Heart left ventricle (tissue), 16 donors: ENCODE measurements at regions of chr11 and their contacts with region 1.

Region 1: GRCh38 chr11:65418711-65419459 is 3.7 kb upstream of the NEAT1 start:
- DNase-seq: peak; percentile 98 to 99 (median 99)
- ATAC-seq: peak; percentile 41 to 59 (median 58)
- H3K4me3 ChIP-seq: peak overlapping the region; percentile 6 to 96 (median 82)
- H3K27ac ChIP-seq: peak overlapping the region; percentile 98 to 100 (median 100)
- H3K4me1 ChIP-seq: peaks cover 11 to 68% (median 55%) of the 10 kb centered on the region in 12 donors
- H3K27me3 ChIP-seq: no peaks in the 10 kb centered on the region
- CTCF ChIP-seq: no peak
- POLR2A ChIP-seq: peak in 1 of 2 donors; percentile 54

Region 2: DNA sequence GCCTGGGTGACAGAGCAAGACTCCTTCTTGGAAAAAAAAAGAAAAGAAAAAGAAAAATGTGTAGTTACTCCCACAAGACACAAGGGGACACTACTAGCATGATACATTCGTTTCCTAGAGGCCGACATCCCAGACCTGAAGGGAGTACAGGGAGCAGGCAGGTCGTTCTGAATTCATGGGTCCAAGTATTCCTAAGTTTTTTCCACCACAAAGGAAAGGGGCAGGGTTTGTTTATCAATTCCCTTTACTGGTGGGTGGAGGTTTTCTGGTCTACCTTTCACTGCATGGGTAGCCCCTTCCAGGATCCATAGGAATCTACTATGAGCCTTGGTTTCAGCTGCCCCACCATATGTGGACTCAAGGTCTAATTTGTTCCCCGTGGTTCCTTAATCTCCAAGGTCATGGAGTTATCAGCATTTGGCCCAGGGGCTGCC is 52.5 kb before region 1 on chr11:
- intact Hi-C with region 1: loop called in 5 of 10 experiments (anchors 5 to 10 kb)
- DNase-seq: no peak
- ATAC-seq: peak; percentile 38 to 71 (median 66)
- H3K4me3 ChIP-seq: no peak overlapping the region
- H3K27ac ChIP-seq: peak overlapping the region in 11 of 12 donors; percentile 19 to 77 (median 63)
- H3K4me1 ChIP-seq: peaks cover 0 to 31% (median 14%) of the 10 kb centered on the region in 12 donors
- H3K27me3 ChIP-seq: no peaks in the 10 kb centered on the region
- CTCF ChIP-seq: peak; percentile 66 to 85 (median 78)
- POLR2A ChIP-seq: no peak

Region 3: GRCh38 chr11:65471410-65471762 is 52.5 kb after region 1 on chr11:
- intact Hi-C with region 1: loop called in 4 of 10 experiments (anchors 1 to 5 kb)
- DNase-seq: peak; percentile 83 to 94 (median 86)
- ATAC-seq: peak; percentile 86 to 91 (median 88)
- H3K4me3 ChIP-seq: peak overlapping the region in 11 of 12 donors; percentile 14 to 48 (median 36)
- H3K27ac ChIP-seq: peak overlapping the region; percentile 94 to 100 (median 98)
- H3K4me1 ChIP-seq: peaks cover 13 to 48% (median 35%) of the 10 kb centered on the region in 12 donors
- H3K27me3 ChIP-seq: no peaks in the 10 kb centered on the region
- CTCF ChIP-seq: peak; percentile 55 to 81 (median 70)
- POLR2A ChIP-seq: no peak

Region 4: GRCh38 chr11:65497141-65498041 is 78.5 kb after region 1 on chr11:
- intact Hi-C with region 1: loop called in 7 of 10 experiments (anchors 1 to 5 kb)
- DNase-seq: peak; percentile 99 to 100 (median 99)
- ATAC-seq: peak; percentile 77 to 93 (median 82)
- H3K4me3 ChIP-seq: peak overlapping the region; percentile 52 to 90 (median 81)
- H3K27ac ChIP-seq: peak overlapping the region; percentile 90 to 100 (median 99)
- H3K4me1 ChIP-seq: peaks cover 19 to 52% (median 47%) of the 10 kb centered on the region in 12 donors
- H3K27me3 ChIP-seq: no peaks in the 10 kb centered on the region
- CTCF ChIP-seq: peak in 1 of 12 donors; percentile 8
- POLR2A ChIP-seq: peak; percentile 48 to 90

Region 5: DNA sequence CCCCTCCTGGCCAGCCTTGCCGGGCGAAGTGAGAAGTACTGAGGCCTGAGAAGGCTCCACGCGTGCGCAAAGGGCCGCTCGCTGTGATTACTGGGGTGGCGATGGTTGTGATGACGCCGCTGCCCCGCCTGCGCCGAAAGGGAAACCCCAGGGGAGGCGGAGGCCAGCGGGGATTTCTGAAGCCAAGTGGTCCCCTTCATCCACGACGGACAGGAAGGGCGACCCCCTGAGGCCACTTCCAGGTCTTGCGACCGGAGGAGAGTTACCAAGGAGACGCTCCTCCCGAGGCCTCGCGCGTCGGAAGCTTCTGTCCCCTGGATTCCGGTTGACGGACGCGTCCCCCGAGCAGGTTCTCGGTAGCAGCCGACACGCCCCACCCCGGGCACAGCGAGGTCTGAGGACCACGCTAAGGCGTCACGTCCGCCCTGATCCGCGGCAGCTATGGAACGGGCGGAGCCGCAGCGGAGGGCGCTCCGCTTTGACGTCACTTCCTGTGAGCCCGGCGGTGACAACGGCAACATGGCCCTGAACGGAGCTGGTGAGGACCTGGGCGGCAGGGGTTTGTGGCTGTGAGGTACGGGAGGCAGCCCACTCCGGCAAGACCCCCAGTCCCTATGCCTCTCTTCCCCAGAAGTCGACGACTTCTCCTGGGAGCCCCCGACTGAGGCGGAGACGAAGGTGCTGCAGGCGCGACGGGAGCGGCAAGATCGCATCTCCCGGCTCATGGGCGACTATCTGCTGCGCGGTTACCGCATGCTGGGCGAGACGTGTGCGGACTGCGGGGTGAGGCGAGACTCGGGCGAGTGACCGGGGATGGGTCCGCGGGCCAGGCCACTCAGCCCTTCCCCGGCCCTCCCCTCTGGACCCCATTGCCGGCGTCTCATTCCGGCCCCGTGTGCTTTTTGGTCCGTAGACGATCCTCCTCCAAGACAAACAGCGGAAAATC is 151.4 kb after region 1 on chr11 and contains the start of gene ZNRD2:
- intact Hi-C with region 1: loop called in 1 of 10 experiments (anchors 5 kb)
- DNase-seq: peak; percentile 98 to 99 (median 99)
- ATAC-seq: peak; percentile 85 to 92 (median 90)
- H3K4me3 ChIP-seq: peak within 1 kb of the TSS; percentile 56 to 96 (median 82)
- H3K27ac ChIP-seq: peak within 1 kb of the TSS; percentile 64 to 99 (median 95)
- H3K4me1 ChIP-seq: peaks cover 17 to 77% (median 55%) of the 10 kb centered on the region in 12 donors
- H3K27me3 ChIP-seq: peaks cover 0 to 6% (median 0%) of the 10 kb centered on the region in 9 donors
- CTCF ChIP-seq: peak in 11 of 12 donors; percentile 33 to 71 (median 55)
- POLR2A ChIP-seq: peak in 1 of 2 donors; percentile 72
- total RNA-seq, gene ZNRD2: 23.2 to 63.6 (median 33.9) TPM